Activated B cell treated with CpG ODN at 0.5 μM for 24 hours (primary cell): ENCODE measurements at regions of chr4 and their contacts with region 1.

Region 1: GRCh38 chr4:140153718-140154571 is at the start of gene MAML3:
- DNase-seq: peak; percentile 67
- ATAC-seq: peak; percentile 30
- H3K4me3 Mint-ChIP-seq: peak within 1 kb of the TSS; percentile 88
- H3K27ac Mint-ChIP-seq: peak within 1 kb of the TSS; percentile 81
- H3K4me1 Mint-ChIP-seq: peaks cover 52% of the 10 kb centered on the region
- H3K27me3 Mint-ChIP-seq: peaks cover 29% of the 10 kb centered on the region
- CTCF ChIP-seq: no peak
- total RNA-seq, gene MAML3: 1.9 and 2.6 TPM in 2 replicates

Region 2: DNA sequence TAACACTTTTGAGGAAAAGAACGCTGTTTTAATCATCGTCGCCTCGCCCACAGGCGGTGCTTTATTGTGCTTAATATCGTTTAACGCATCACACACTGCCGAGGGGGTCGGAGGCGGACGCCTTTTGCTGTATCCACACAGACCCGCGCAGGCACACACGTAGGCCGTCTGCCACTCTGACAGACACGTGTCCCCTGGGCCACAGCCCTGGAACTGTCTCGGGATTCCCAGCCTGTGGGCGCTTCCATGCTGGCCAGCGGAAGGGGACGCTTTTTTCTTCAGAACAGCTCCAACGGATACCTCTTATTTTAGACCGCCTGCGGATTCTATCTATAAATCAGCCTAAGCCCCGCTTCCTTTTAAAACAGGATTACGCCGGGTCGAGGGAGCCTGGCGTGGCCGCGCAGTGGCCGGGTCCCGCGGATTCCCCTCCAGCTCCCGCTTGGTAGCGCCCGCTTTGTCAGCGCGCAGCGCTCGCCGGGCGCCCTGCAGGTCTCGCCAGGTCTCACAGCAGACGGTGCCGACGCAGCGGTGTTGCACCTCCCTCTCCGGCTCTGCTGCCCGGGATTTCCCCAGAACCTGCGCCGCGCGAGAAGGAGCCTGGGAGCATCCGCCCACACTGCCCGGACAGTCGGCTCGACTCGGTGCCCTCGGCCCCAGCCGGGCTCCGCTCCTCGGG is 1138.5 kb before region 1 on chr4 and contains the start of gene NOCT:
- CTCF ChIA-PET with region 1: no interaction called
- POLR2A ChIA-PET with region 1: no interaction called
- intact Hi-C with region 1: loop called (anchors 1 kb)
- DNase-seq: peak; percentile 86
- ATAC-seq: peak; percentile 91
- H3K4me3 Mint-ChIP-seq: peak within 1 kb of the TSS; percentile 92
- H3K27ac Mint-ChIP-seq: peak within 1 kb of the TSS; percentile 99
- H3K4me1 Mint-ChIP-seq: peaks cover 32% of the 10 kb centered on the region
- H3K27me3 Mint-ChIP-seq: no peaks in the 10 kb centered on the region
- CTCF ChIP-seq: no peak
- total RNA-seq, gene NOCT: 9.1 and 9.4 TPM in 2 replicates

Region 3: DNA sequence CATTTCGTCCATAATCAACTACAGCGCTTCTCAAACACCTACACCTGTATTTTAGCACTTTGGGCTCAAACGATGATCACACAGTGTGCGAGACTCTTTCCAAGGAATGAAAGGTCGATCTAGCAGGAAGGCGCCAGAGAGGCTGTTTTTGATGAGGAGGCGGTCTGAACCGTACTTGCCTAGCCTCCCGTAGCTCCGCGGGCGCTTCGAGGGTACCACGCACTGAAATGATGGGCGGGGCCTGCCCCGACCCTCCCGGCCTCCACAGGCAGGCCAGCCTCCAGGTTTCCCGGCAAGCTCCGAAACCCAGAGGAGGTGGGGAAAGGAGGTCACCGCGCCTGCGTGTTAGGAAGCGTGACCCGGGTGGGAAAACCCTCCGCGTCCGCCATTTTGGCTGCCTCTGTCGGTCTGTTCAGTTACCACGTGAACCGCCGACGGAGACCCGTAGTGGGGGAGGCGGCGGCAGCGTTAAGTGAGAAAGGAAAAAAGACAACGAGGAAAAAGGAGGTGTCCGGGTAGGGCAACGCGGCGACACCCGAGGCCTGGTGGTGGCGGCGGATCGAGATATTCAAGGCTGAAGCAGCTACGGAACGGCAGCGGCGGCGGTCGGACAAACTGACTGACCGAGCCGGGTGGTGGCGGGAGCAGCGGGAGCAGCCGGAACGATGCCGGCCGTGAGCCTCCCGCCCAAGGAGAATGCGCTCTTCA is 852.7 kb before region 1 on chr4 and contains the start of gene NAA15:
- CTCF ChIA-PET with region 1: no interaction called
- POLR2A ChIA-PET with region 1: no interaction called
- intact Hi-C with region 1: loop called (anchors 2 kb)
- DNase-seq: peak; percentile 93
- ATAC-seq: peak; percentile 91
- H3K4me3 Mint-ChIP-seq: peak within 1 kb of the TSS; percentile 99
- H3K27ac Mint-ChIP-seq: peak within 1 kb of the TSS; percentile 98
- H3K4me1 Mint-ChIP-seq: peaks cover 49% of the 10 kb centered on the region
- H3K27me3 Mint-ChIP-seq: no peaks in the 10 kb centered on the region
- CTCF ChIP-seq: no peak
- total RNA-seq, gene NAA15: 62.6 and 66.5 TPM in 2 replicates

Region 4: DNA sequence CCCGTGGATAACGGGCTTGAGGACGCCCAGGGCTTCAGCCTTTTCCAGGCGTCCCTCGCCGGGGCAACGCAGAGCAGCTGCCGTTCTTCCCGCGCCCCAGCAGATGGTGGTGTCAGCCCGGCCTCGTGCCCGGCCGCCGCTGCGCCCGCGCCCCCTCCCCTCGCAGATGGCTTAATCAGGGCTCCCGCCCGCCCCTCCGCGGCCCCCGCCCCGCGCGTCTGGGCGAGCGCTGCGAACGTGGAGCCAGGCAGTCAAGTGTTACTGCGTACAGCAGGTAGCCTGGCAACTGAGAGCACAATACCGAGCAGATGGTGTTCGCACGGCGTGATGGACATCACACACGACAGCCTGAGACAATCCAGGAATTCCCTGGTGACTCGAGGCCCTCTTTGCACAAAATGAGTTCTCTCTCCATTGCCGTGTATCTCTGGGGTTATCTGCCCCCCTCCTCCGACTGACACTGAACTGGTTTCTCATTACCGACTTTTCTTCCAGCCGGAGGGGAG is 419.0 kb before region 1 on chr4:
- CTCF ChIA-PET with region 1: interaction called, 3 read pairs
- POLR2A ChIA-PET with region 1: no interaction called
- intact Hi-C with region 1: loop called (anchors 2 kb)
- DNase-seq: peak; percentile 66
- ATAC-seq: peak; percentile 87
- H3K4me3 Mint-ChIP-seq: peak overlapping the region; percentile 76
- H3K27ac Mint-ChIP-seq: no peak overlapping the region
- H3K4me1 Mint-ChIP-seq: peaks cover 15% of the 10 kb centered on the region
- H3K27me3 Mint-ChIP-seq: peaks cover 13% of the 10 kb centered on the region
- CTCF ChIP-seq: no peak

Region 5: DNA sequence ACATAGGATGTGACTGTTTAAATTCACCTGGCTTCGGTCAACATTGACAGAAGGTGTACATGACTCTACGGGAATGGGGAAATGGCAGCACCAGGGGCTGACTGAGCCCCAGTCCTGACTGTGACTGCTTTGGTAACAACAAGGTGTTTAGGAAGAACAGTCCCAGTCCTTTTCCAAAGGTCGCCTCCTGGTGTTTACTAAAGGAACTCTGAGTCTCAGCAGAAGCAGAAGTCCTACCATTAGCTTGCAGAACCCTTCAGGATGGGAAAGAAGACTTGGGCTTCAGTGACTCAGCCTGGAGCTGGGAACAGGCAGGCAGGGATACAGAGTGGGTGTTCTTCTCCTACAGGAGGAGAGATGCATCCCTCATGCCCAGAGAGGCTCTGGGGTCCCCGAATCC is 385.0 kb before region 1 on chr4:
- CTCF ChIA-PET with region 1: no interaction called
- POLR2A ChIA-PET with region 1: no interaction called
- intact Hi-C with region 1: no loop called
- DNase-seq: no peak
- ATAC-seq: no peak
- H3K4me3 Mint-ChIP-seq: no peak overlapping the region
- H3K27ac Mint-ChIP-seq: no peak overlapping the region
- H3K4me1 Mint-ChIP-seq: peaks cover 17% of the 10 kb centered on the region
- H3K27me3 Mint-ChIP-seq: peaks cover 5% of the 10 kb centered on the region
- CTCF ChIP-seq: no peak

Region 6: GRCh38 chr4:140057701-140058100 is 96.2 kb before region 1 on chr4:
- CTCF ChIA-PET with region 1: interaction called, 3 read pairs
- POLR2A ChIA-PET with region 1: interaction called, 15 read pairs
- intact Hi-C with region 1: loop called (anchors 1 kb)
- DNase-seq: no peak
- ATAC-seq: peak; percentile 50
- H3K4me3 Mint-ChIP-seq: peak overlapping the region; percentile 0
- H3K27ac Mint-ChIP-seq: peak overlapping the region; percentile 82
- H3K4me1 Mint-ChIP-seq: peaks cover 45% of the 10 kb centered on the region
- H3K27me3 Mint-ChIP-seq: peaks cover 19% of the 10 kb centered on the region
- CTCF ChIP-seq: no peak

Region 7: GRCh38 chr4:140186651-140187315 is 32.8 kb after region 1 on chr4:
- CTCF ChIA-PET with region 1: no interaction called
- POLR2A ChIA-PET with region 1: no interaction called
- intact Hi-C with region 1: no loop called
- DNase-seq: no peak
- ATAC-seq: no peak
- H3K4me3 Mint-ChIP-seq: no peak overlapping the region
- H3K27ac Mint-ChIP-seq: no peak overlapping the region
- H3K4me1 Mint-ChIP-seq: no peaks in the 10 kb centered on the region
- H3K27me3 Mint-ChIP-seq: peaks cover 20% of the 10 kb centered on the region
- CTCF ChIP-seq: no peak

Region 8: DNA sequence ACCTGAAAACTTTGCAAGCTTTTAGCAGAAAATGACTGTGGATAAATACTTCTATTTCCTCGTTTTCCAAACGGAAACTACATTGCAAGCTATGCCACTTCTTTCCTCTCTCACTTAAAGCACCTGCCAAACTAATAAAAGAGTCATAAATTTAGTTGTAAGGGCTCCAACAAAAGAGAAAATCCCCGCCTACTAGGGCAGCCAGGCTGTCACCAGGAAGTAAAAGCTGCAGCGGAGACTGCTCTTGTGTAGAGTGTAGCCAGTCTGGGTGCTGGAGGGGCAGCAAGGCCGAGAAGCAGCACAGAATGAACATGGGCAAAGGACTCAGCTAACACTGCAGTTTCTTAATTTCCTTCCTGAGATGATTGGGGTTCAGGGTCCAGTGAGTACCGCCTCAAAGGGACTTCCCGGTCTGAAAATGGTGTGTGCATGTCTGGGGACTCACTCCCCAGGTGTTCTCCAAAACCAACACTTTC is 89.4 kb after region 1 on chr4:
- CTCF ChIA-PET with region 1: interaction called, 5 read pairs
- POLR2A ChIA-PET with region 1: interaction called, 12 read pairs
- intact Hi-C with region 1: loop called (anchors 2 kb)
- DNase-seq: no peak
- ATAC-seq: peak; percentile 91
- H3K4me3 Mint-ChIP-seq: peak overlapping the region; percentile 60
- H3K27ac Mint-ChIP-seq: peak overlapping the region; percentile 79
- H3K4me1 Mint-ChIP-seq: peaks cover 47% of the 10 kb centered on the region
- H3K27me3 Mint-ChIP-seq: peaks cover 3% of the 10 kb centered on the region
- CTCF ChIP-seq: no peak

Region 9: DNA sequence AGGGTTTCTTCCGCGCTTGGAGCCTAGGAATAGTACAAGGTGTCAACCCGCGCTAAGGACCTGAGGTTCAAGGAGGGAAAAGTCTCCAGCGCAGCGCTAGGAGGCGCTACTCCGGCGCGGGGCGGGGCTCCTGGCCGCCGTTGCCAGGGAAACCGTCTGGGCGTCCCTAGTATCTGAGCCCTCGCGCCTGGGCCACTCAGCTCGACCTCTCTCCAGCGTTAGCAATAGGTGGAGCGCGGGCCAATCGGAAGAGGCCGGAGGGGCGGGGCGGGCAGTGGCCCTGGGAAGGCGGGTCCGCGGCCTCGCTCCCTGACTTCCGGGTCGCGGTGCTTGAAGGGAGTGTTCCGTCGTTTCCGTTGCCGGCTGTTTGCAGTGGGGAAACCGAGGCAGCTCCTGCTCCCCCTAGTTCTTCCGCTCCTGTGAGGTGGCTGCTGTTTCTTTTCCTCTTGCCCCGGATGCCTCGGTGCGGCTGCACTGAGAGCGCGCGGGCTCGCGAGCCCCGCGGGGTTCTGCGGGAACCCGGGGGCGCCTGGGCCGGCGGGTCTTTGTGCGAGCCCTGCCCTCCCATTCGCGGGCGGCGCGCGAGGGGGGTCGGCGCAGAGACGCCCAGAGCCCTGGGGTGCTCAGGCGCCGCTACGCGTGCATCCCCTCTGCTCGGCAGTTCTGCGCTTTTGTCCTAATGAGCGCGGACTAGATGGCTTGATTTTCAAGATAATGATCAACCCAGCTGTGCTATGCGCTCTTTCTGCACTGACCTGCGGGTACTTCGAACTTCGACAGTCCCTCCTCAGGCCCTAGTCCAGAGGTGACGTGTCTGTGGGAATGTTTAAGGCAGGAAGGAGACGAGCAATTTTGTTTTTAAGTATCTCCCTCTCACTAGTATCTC is 370.2 kb after region 1 on chr4 and contains the start of gene ELMOD2:
- CTCF ChIA-PET with region 1: no interaction called
- POLR2A ChIA-PET with region 1: interaction called, 4 read pairs
- intact Hi-C with region 1: loop called (anchors 5 kb)
- DNase-seq: peak; percentile 94
- ATAC-seq: peak; percentile 99
- H3K4me3 Mint-ChIP-seq: peak within 1 kb of the TSS; percentile 90
- H3K27ac Mint-ChIP-seq: peak within 1 kb of the TSS; percentile 84
- H3K4me1 Mint-ChIP-seq: peaks cover 14% of the 10 kb centered on the region
- H3K27me3 Mint-ChIP-seq: no peaks in the 10 kb centered on the region
- CTCF ChIP-seq: peak; percentile 72
- total RNA-seq, gene ELMOD2: 20.4 and 20.8 TPM in 2 replicates